ENCODE measurements at regions of chr5 and their contacts with region 1.

Region 1: GRCh38 chr5:2149196-2149541 is 266.4 kb upstream of the IRX4 start:
- DNase-seq: peak; percentile 83
- H3K4me3 Mint-ChIP-seq: peak overlapping the region; percentile 14
- H3K27ac Mint-ChIP-seq: peak overlapping the region; percentile 59
- H3K4me1 Mint-ChIP-seq: peaks cover 9% of the 10 kb centered on the region
- H3K27me3 Mint-ChIP-seq: no peaks in the 10 kb centered on the region
- CTCF ChIP-seq: no peak

Region 2: GRCh38 chr5:1724822-1725643 is 424.1 kb before region 1 on chr5:
- CTCF ChIA-PET with region 1: no interaction called
- POLR2A ChIA-PET with region 1: no interaction called
- intact Hi-C with region 1: no loop called
- DNase-seq: no peak
- H3K4me3 Mint-ChIP-seq: no peak overlapping the region
- H3K27ac Mint-ChIP-seq: no peak overlapping the region
- H3K4me1 Mint-ChIP-seq: no peaks in the 10 kb centered on the region
- H3K27me3 Mint-ChIP-seq: peaks cover 19% of the 10 kb centered on the region
- CTCF ChIP-seq: no peak

Region 3: GRCh38 chr5:1763548-1763911 is 385.6 kb before region 1 on chr5:
- CTCF ChIA-PET with region 1: interaction called, 9 read pairs
- POLR2A ChIA-PET with region 1: no interaction called
- intact Hi-C with region 1: loop called (anchors 1 kb)
- DNase-seq: peak; percentile 71
- H3K4me3 Mint-ChIP-seq: no peak overlapping the region
- H3K27ac Mint-ChIP-seq: no peak overlapping the region
- H3K4me1 Mint-ChIP-seq: no peaks in the 10 kb centered on the region
- H3K27me3 Mint-ChIP-seq: no peaks in the 10 kb centered on the region
- CTCF ChIP-seq: peak; percentile 78

Region 4: DNA sequence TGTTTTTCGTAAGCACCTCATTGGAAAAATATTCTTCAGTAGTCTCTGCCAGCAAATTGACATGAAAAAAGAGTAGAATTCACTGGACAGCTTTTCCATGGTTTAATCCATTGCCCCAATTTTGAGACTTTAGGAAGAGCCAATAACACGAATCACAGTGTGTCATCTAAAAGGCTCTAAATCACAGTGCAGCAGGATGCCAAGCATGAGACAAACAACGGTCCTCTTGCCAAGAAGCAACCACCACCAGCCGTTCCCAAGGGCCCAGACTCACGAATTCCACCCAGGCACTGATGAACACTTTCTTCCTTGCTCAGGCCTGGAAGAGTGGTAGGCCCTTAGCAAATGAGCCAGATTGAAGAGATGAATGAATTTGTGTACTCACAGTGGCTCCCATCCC is 248.1 kb before region 1 on chr5:
- CTCF ChIA-PET with region 1: no interaction called
- POLR2A ChIA-PET with region 1: no interaction called
- intact Hi-C with region 1: no loop called
- DNase-seq: no peak
- H3K4me3 Mint-ChIP-seq: no peak overlapping the region
- H3K27ac Mint-ChIP-seq: no peak overlapping the region
- H3K4me1 Mint-ChIP-seq: no peaks in the 10 kb centered on the region
- H3K27me3 Mint-ChIP-seq: no peaks in the 10 kb centered on the region
- CTCF ChIP-seq: no peak

Region 5: GRCh38 chr5:2038321-2039179 is 110.6 kb before region 1 on chr5:
- CTCF ChIA-PET with region 1: no interaction called
- POLR2A ChIA-PET with region 1: no interaction called
- intact Hi-C with region 1: loop called (anchors 1 kb)
- DNase-seq: peak; percentile 68
- H3K4me3 Mint-ChIP-seq: peak overlapping the region; percentile 71
- H3K27ac Mint-ChIP-seq: no peak overlapping the region
- H3K4me1 Mint-ChIP-seq: no peaks in the 10 kb centered on the region
- H3K27me3 Mint-ChIP-seq: peaks cover 27% of the 10 kb centered on the region
- CTCF ChIP-seq: peak; percentile 83

Region 6: GRCh38 chr5:2075365-2075764 is 73.8 kb before region 1 on chr5:
- CTCF ChIA-PET with region 1: interaction called, 4 read pairs
- POLR2A ChIA-PET with region 1: interaction called, 3 read pairs
- intact Hi-C with region 1: loop called (anchors 1 kb)
- DNase-seq: no peak
- H3K4me3 Mint-ChIP-seq: no peak overlapping the region
- H3K27ac Mint-ChIP-seq: no peak overlapping the region
- H3K4me1 Mint-ChIP-seq: no peaks in the 10 kb centered on the region
- H3K27me3 Mint-ChIP-seq: no peaks in the 10 kb centered on the region
- CTCF ChIP-seq: no peak

Region 7: GRCh38 chr5:2093859-2094615 is 55.1 kb before region 1 on chr5:
- CTCF ChIA-PET with region 1: no interaction called
- POLR2A ChIA-PET with region 1: no interaction called
- intact Hi-C with region 1: loop called (anchors 1 kb)
- DNase-seq: peak; percentile 92
- H3K4me3 Mint-ChIP-seq: peak overlapping the region; percentile 62
- H3K27ac Mint-ChIP-seq: peak overlapping the region; percentile 99
- H3K4me1 Mint-ChIP-seq: peaks cover 21% of the 10 kb centered on the region
- H3K27me3 Mint-ChIP-seq: no peaks in the 10 kb centered on the region
- CTCF ChIP-seq: no peak

Measured in MCF 10A (cell line).